Activated CD4-positive, alpha-beta T cell treated with anti-CD3 and anti-CD28 coated beads for 36 hours (primary cell): ENCODE measurements at regions of chr7 and their contacts with region 1.

Region 1: GRCh38 chr7:116862234-116862950 is at the start of gene CAPZA2:
- DNase-seq: peak; percentile 97
- ATAC-seq: peak; percentile 95
- H3K4me3 Mint-ChIP-seq: peak within 1 kb of the TSS; percentile 95
- H3K27ac Mint-ChIP-seq: peak within 1 kb of the TSS; percentile 96
- H3K4me1 Mint-ChIP-seq: peaks cover 40% of the 10 kb centered on the region
- H3K27me3 Mint-ChIP-seq: peaks cover 4% of the 10 kb centered on the region
- total RNA-seq, gene CAPZA2: 173 to 262 TPM

Region 2: GRCh38 chr7:116671681-116672595 is 190.5 kb before region 1 on chr7 and contains the start of gene MET:
- CTCF ChIA-PET with region 1: no interaction called
- POLR2A ChIA-PET with region 1: no interaction called
- intact Hi-C with region 1: loop called in 1 of 2 experiments (anchors 2 kb)
- DNase-seq: peak; percentile 82
- ATAC-seq: peak; percentile 97
- H3K4me3 Mint-ChIP-seq: peak within 1 kb of the TSS; percentile 46
- H3K27ac Mint-ChIP-seq: no peak within 1 kb of the TSS
- H3K4me1 Mint-ChIP-seq: peaks cover 7% of the 10 kb centered on the region
- H3K27me3 Mint-ChIP-seq: peaks cover 47% of the 10 kb centered on the region
- total RNA-seq, gene MET: 0.63 to 0.91 TPM

Region 3: DNA sequence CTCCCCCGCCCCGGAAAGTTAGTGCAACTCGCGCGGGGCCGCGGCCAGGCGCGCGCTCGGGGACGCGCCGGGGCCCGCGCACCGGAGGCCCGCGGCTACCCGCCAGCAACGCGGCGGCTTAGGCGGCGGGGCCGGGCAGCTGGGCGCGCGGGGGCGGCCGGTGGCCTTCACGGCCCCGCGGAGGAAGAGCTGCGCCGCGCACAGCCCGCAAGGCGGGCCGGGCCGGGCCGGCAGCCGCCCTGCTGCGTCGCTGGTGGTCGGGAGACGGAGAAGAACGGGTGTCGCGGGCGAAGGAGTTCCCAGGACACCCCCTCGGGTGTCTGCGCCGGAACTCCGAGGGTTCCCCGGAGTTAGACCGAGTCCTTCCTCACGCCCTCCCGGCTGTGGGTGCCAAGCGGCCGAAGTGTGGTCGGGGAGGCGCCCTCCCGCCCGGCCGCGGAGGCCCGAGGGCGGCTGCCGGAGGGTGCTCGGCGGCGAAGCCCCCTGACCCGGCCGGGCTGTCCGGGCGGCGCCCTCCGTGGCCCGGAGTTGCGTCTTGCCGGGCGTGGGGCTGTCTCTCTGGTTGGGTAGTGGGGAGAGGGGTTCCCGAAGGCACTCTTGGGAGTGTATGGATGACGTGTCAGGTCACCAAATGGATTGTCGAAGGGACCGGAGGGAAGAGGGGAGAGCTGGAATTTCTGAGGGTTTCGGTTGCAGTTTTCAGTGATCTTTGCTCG is 91.5 kb after region 1 on chr7:
- CTCF ChIA-PET with region 1: no interaction called
- POLR2A ChIA-PET with region 1: no interaction called
- intact Hi-C with region 1: loop called (anchors 1 to 2 kb)
- DNase-seq: peak; percentile 43
- ATAC-seq: peak; percentile 54
- H3K4me3 Mint-ChIP-seq: peak overlapping the region; percentile 93
- H3K27ac Mint-ChIP-seq: peak overlapping the region; percentile 97
- H3K4me1 Mint-ChIP-seq: peaks cover 31% of the 10 kb centered on the region
- H3K27me3 Mint-ChIP-seq: no peaks in the 10 kb centered on the region

Region 4: GRCh38 chr7:117117172-117117571 is 254.8 kb after region 1 on chr7:
- CTCF ChIA-PET with region 1: no interaction called
- POLR2A ChIA-PET with region 1: no interaction called
- intact Hi-C with region 1: no loop called
- DNase-seq: no peak
- ATAC-seq: no peak
- H3K4me3 Mint-ChIP-seq: no peak overlapping the region
- H3K27ac Mint-ChIP-seq: no peak overlapping the region
- H3K4me1 Mint-ChIP-seq: no peaks in the 10 kb centered on the region
- H3K27me3 Mint-ChIP-seq: no peaks in the 10 kb centered on the region

Region 5: DNA sequence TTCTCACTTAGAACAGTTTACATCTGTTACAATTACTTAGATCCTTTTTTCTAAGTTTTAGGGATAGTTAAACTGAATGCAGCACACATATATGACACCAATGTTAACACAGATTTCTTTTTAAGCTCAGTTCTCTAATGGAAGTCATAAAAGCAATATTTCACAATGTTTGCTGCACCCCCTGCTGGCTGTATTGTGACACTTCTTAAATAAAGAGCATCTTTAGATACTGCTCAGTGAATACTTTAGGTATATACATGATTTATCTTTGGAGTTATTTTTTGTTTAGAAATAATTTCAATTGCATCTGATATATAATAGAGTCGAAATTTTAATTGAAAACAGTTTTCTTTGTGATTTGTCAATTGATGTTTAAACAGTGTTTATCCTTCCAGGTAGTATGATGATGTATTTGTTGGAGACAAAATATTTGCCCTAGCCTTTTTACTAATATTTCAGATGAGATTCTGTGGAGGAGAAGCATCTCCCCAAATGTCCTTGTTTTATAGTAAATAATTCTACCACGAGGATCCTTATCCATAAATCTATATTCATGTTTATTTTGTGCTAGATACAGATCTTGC is 265.3 kb after region 1 on chr7:
- CTCF ChIA-PET with region 1: interaction called, 4 read pairs
- POLR2A ChIA-PET with region 1: no interaction called
- intact Hi-C with region 1: loop called in 1 of 2 experiments (anchors 5 kb)
- DNase-seq: peak; percentile 72
- ATAC-seq: peak; percentile 40
- H3K4me3 Mint-ChIP-seq: no peak overlapping the region
- H3K27ac Mint-ChIP-seq: no peak overlapping the region
- H3K4me1 Mint-ChIP-seq: peaks cover 15% of the 10 kb centered on the region
- H3K27me3 Mint-ChIP-seq: no peaks in the 10 kb centered on the region